SK-N-SH (cell line): ENCODE measurements at regions of chr3 and their contacts with region 1.

Region 1: DNA sequence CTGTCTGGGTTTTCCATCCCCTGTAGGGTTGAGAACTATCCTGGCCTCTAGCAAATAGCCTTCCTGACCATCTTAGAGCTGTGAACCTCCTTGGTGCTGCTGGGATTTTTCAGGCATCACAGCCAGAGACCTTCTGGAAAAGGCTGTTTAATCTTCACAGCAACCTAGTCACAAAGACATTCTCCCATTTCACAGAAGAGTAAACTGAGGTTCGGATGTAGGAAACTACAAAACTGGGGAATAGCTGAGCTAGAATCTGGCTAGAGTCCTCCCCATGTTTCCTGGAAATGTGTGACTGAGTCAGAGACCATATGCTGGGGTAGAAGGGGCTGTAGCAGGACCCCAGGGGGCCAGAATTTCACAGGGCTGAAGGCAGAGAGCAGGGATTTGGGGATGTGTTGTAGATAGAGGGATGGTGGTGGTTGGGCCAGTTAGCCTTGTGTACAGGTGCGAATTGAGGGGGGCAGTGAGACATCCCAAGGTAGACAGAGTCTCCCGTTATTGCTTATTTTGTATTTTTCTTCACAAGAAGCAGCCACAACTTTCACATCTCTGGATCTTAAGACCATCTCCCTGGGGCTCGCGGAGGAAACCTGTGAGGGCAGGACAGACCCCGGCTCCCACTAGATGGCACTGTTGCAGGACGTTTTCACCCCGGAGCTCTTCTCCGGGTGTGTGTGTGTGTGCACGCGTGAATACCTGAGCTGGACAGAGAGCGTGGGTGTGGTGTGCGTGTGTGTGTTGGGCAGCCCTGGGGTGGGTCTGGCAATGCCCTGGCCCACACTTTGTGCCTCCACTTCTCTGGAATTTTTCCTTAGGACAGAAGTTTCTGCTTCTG is 66.9 kb upstream of the PRR23C start:
- DNase-seq: peak; percentile 69
- H3K4me3 ChIP-seq: peak overlapping the region in 1 of 2 experiments; percentile 11; a peak in 1 of 4 replicates
- H3K27ac ChIP-seq: no peak overlapping the region
- H3K4me1 ChIP-seq: no peaks in the 10 kb centered on the region
- H3K27me3 ChIP-seq: peaks cover 19% of the 10 kb centered on the region
- CTCF ChIP-seq: peak; percentile 85
- EP300 ChIP-seq: no peak
- RAD21 ChIP-seq: peak; percentile 79

Region 2: DNA sequence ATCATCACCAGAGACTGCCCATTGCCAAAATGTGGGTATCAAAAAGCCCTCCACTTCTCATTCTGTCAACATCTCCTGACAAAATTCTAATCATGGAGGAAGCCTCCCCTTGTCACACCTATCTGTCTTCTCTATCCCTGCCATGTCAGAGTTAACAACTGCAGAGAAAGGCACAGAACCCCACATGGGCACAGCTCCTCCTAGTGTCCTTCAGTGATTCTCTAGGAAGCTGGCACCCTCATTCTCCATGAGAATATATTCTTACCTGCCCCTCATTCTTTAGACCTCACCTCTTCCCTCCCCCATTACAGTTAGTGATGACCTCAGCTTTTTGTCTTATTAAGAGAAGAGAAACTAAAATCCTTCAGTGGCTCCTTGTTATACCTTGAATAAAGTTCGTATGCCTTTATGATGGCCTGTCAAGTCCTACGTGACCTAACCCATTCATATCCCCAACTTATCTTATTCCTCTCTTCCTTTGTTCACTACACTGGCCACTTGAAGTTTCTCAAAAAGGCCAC is 826.6 kb before region 1 on chr3:
- CTCF ChIA-PET with region 1: no interaction called
- POLR2A ChIA-PET with region 1: no interaction called
- DNase-seq: no peak
- H3K4me3 ChIP-seq: no peak overlapping the region
- H3K27ac ChIP-seq: no peak overlapping the region
- H3K4me1 ChIP-seq: no peaks in the 10 kb centered on the region
- H3K27me3 ChIP-seq: no peaks in the 10 kb centered on the region
- CTCF ChIP-seq: peak; percentile 16; the same call in 1 of the 2 replicates
- EP300 ChIP-seq: no peak
- RAD21 ChIP-seq: no peak

Region 3: GRCh38 chr3:139095803-139096466 is 15.7 kb before region 1 on chr3:
- CTCF ChIA-PET with region 1: interaction called, 21 read pairs
- POLR2A ChIA-PET with region 1: no interaction called
- DNase-seq: no peak
- H3K4me3 ChIP-seq: no peak overlapping the region
- H3K27ac ChIP-seq: no peak overlapping the region
- H3K4me1 ChIP-seq: no peaks in the 10 kb centered on the region
- H3K27me3 ChIP-seq: no peaks in the 10 kb centered on the region; the same call in 1 of the 2 replicates
- CTCF ChIP-seq: no peak
- EP300 ChIP-seq: no peak
- RAD21 ChIP-seq: no peak

Region 4: DNA sequence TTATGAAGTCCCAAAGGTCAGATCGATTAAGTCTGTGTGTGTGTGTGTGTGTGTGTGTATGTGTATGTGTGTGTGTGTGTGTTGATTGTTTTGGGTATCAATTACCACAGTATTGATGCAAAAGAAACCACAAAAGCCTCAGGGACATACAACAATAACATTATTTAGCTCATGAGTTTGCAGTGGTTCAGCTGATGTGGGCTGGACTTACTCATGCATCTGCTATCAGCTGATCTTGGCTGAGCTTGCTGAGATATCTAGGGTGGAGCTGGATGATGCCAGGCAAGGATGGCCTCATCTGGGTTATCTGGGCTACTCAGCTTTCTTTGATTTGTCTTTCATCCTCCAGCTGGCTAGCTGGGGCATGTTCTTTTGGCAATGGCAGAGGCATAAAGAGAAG is 15.5 kb after region 1 on chr3:
- CTCF ChIA-PET with region 1: interaction called, 27 read pairs
- POLR2A ChIA-PET with region 1: no interaction called
- DNase-seq: no peak
- H3K4me3 ChIP-seq: no peak overlapping the region
- H3K27ac ChIP-seq: no peak overlapping the region
- H3K4me1 ChIP-seq: no peaks in the 10 kb centered on the region
- H3K27me3 ChIP-seq: no peaks in the 10 kb centered on the region
- CTCF ChIP-seq: no peak
- EP300 ChIP-seq: no peak
- RAD21 ChIP-seq: no peak

Region 5: GRCh38 chr3:139227165-139227564 is 115.6 kb after region 1 on chr3:
- CTCF ChIA-PET with region 1: interaction called, 11 read pairs
- POLR2A ChIA-PET with region 1: no interaction called
- DNase-seq: no peak
- H3K4me3 ChIP-seq: no peak overlapping the region
- H3K27ac ChIP-seq: no peak overlapping the region
- H3K4me1 ChIP-seq: peaks cover 0 to 21% of the 10 kb centered on the region in 2 experiments; a peak in 1 of 4 replicates
- H3K27me3 ChIP-seq: no peaks in the 10 kb centered on the region
- CTCF ChIP-seq: no peak
- EP300 ChIP-seq: no peak
- RAD21 ChIP-seq: no peak

Region 6: DNA sequence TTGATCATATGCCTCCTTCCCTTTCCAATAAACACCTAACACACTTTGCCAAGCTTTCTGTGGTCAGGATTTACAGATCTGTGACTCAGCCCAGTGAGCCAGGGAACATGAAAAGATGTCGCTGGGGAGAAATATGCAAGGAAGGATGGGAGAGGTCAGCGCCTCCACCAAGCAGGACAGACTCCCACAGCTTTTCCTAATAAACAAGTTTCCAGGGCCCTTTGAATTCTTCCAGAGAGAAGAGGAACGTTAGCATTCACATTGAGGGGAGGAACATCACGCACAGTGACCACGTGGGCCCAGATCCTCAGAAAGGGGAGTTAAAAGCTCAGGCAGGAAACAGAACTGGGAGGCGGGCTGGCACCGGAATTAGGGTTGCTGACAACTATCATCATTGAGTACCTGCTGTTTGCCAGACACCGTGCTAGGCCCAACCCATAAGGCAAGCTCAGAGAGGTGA is 198.9 kb after region 1 on chr3:
- CTCF ChIA-PET with region 1: interaction called, 10 read pairs
- POLR2A ChIA-PET with region 1: no interaction called
- DNase-seq: no peak
- H3K4me3 ChIP-seq: no peak overlapping the region
- H3K27ac ChIP-seq: peak overlapping the region; percentile 63 to 86; a peak in 3 of 4 replicates
- H3K4me1 ChIP-seq: peaks cover 3 to 43% of the 10 kb centered on the region in 2 experiments; a peak in 3 of 4 replicates
- H3K27me3 ChIP-seq: no peaks in the 10 kb centered on the region
- CTCF ChIP-seq: no peak
- EP300 ChIP-seq: peak in 1 of 2 experiments; percentile 75; a peak in 2 of 4 replicates
- RAD21 ChIP-seq: no peak

Region 7: GRCh38 chr3:139329345-139329850 is 217.8 kb after region 1 on chr3:
- CTCF ChIA-PET with region 1: interaction called, 166 read pairs
- POLR2A ChIA-PET with region 1: no interaction called
- DNase-seq: peak; percentile 87
- H3K4me3 ChIP-seq: peak overlapping the region; percentile 24 to 55; a peak in 2 of 4 replicates
- H3K27ac ChIP-seq: no peak overlapping the region
- H3K4me1 ChIP-seq: peaks cover 0 to 5% of the 10 kb centered on the region in 2 experiments; a peak in 1 of 4 replicates
- H3K27me3 ChIP-seq: peaks cover 11% of the 10 kb centered on the region; the same call in 1 of the 2 replicates
- CTCF ChIP-seq: peak; percentile 99
- EP300 ChIP-seq: no peak
- RAD21 ChIP-seq: peak; percentile 98

Region 8: GRCh38 chr3:139353920-139354556 is 242.4 kb after region 1 on chr3:
- CTCF ChIA-PET with region 1: interaction called, 12 read pairs
- POLR2A ChIA-PET with region 1: no interaction called
- DNase-seq: peak; percentile 53
- H3K4me3 ChIP-seq: no peak overlapping the region; a peak in 1 of 4 replicates
- H3K27ac ChIP-seq: no peak overlapping the region; a peak in 1 of 4 replicates
- H3K4me1 ChIP-seq: peaks cover 0 to 6% of the 10 kb centered on the region in 2 experiments; a peak in 1 of 4 replicates
- H3K27me3 ChIP-seq: no peaks in the 10 kb centered on the region
- CTCF ChIP-seq: peak; percentile 80
- EP300 ChIP-seq: no peak
- RAD21 ChIP-seq: peak; percentile 52

Region 9: GRCh38 chr3:139710212-139710611 is 598.6 kb after region 1 on chr3:
- CTCF ChIA-PET with region 1: no interaction called
- POLR2A ChIA-PET with region 1: no interaction called
- DNase-seq: no peak
- H3K4me3 ChIP-seq: no peak overlapping the region
- H3K27ac ChIP-seq: no peak overlapping the region
- H3K4me1 ChIP-seq: no peaks in the 10 kb centered on the region
- H3K27me3 ChIP-seq: no peaks in the 10 kb centered on the region
- CTCF ChIP-seq: no peak
- EP300 ChIP-seq: no peak
- RAD21 ChIP-seq: no peak